Activated CD4-positive, alpha-beta T cell treated with anti-CD3 and anti-CD28 coated beads for 36 hours (primary cell): ENCODE measurements at regions of chr20 and their contacts with region 1.

Region 1: DNA sequence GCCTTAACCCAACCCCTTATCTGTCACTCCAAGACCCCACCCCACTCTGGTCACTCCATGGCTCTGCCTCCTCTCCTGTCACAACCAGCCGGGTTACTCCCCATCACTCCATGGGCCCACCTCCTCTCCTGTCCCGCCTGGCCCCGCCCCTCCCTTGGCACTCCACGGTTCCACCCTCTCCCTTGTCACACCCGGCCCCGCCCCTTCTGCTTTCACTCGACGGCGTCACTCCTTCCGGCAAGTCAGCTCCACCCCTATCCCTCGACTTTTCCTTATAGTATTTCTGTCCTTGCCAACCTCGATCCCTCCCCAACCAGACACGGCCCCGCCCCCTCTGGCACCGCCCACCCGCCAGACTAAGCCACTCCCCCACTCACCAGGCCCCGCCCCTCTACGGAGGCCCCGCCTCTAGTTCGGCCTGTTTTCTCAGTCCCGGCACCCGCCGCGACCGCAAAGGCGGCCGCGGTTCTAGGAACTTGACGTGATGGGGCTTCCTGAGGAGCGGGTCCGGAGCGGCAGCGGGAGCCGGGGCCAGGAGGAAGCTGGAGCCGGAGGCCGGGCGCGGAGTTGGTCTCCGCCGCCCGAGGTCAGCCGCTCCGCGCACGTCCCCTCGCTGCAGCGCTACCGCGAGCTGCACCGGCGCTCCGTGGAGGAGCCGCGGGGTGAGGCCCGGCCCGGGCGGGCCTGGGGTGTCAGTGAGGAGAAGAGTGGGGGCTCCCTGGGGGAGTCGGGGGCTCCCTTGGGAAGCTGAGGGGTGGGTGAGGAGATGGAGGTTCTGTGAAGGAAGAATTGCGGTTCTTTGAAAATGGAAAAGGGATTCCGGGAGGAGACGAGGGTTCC is at the start of gene ACSS2:
- DNase-seq: peak; percentile 99
- ATAC-seq: peak; percentile 86
- H3K4me3 Mint-ChIP-seq: peak within 1 kb of the TSS; percentile 90
- H3K27ac Mint-ChIP-seq: peak within 1 kb of the TSS; percentile 85
- H3K4me1 Mint-ChIP-seq: peaks cover 54% of the 10 kb centered on the region
- H3K27me3 Mint-ChIP-seq: no peaks in the 10 kb centered on the region
- total RNA-seq, gene ACSS2: 29.9 to 35.1 TPM

Region 2: DNA sequence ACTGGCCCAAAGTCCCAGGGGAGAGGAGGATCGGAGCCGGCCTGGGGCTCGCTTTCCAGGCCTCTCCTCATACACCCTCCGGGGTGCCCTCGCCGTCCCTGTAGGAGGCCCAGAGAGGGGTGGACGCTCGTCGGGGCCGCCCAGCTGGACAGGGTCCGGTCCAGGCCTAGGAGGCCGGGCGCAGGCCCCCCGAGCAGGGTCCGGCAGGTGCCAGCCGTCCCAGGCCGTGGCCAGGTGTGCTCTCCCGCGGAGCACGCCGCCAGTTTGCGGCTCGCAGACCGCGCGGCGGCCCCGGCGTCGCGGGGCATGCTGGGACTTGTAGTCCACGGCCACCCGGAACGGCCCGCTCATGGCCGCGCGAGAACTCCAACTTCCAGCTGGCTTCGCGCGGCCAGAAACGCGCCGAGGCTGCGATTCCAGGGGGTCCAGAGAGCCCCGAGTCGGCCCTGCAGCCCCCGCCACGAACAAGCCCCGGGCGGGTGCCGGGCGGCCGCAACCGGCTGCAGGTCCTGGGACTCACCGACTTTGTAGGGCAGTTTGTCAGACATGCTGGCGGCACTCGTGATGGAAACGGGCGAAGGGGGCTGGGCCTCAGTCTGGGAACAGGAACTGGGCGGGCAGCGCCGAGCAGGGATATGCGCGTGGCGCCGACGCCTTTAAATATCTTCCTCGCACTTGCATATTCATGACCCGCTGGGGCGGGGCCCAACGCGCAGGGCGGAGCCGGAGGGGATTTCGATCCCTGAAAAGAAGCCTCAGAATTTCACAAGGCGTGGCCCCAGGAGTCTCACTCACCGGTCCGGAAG is 573.5 kb before region 1 on chr20 and contains the start of gene AHCY:
- CTCF ChIA-PET with region 1: no interaction called
- POLR2A ChIA-PET with region 1: no interaction called
- intact Hi-C with region 1: loop called in 1 of 2 experiments (anchors 1 kb)
- DNase-seq: peak; percentile 97
- ATAC-seq: peak; percentile 96
- H3K4me3 Mint-ChIP-seq: peak within 1 kb of the TSS; percentile 90
- H3K27ac Mint-ChIP-seq: peak within 1 kb of the TSS; percentile 91
- H3K4me1 Mint-ChIP-seq: peaks cover 18% of the 10 kb centered on the region
- H3K27me3 Mint-ChIP-seq: no peaks in the 10 kb centered on the region
- total RNA-seq, gene AHCY: 183 to 189 TPM

Region 3: GRCh38 chr20:34704177-34705007 is 172.0 kb before region 1 on chr20 and contains the start of gene TP53INP2:
- CTCF ChIA-PET with region 1: no interaction called
- POLR2A ChIA-PET with region 1: no interaction called
- intact Hi-C with region 1: loop called in 1 of 2 experiments (anchors 1 kb)
- DNase-seq: peak; percentile 89
- ATAC-seq: peak; percentile 33
- H3K4me3 Mint-ChIP-seq: peak within 1 kb of the TSS; percentile 82
- H3K27ac Mint-ChIP-seq: peak within 1 kb of the TSS; percentile 63
- H3K4me1 Mint-ChIP-seq: peaks cover 22% of the 10 kb centered on the region
- H3K27me3 Mint-ChIP-seq: peaks cover 10% of the 10 kb centered on the region
- total RNA-seq, gene TP53INP2: 2.2 to 2.3 TPM

Region 4: GRCh38 chr20:34891166-34892062 is 15.0 kb after region 1 on chr20:
- CTCF ChIA-PET with region 1: interaction called, 6 read pairs
- POLR2A ChIA-PET with region 1: no interaction called
- intact Hi-C with region 1: loop called (anchors 1 kb)
- DNase-seq: peak; percentile 64
- ATAC-seq: peak; percentile 97
- H3K4me3 Mint-ChIP-seq: peak overlapping the region; percentile 16
- H3K27ac Mint-ChIP-seq: peak overlapping the region; percentile 78
- H3K4me1 Mint-ChIP-seq: peaks cover 42% of the 10 kb centered on the region
- H3K27me3 Mint-ChIP-seq: no peaks in the 10 kb centered on the region

Region 5: DNA sequence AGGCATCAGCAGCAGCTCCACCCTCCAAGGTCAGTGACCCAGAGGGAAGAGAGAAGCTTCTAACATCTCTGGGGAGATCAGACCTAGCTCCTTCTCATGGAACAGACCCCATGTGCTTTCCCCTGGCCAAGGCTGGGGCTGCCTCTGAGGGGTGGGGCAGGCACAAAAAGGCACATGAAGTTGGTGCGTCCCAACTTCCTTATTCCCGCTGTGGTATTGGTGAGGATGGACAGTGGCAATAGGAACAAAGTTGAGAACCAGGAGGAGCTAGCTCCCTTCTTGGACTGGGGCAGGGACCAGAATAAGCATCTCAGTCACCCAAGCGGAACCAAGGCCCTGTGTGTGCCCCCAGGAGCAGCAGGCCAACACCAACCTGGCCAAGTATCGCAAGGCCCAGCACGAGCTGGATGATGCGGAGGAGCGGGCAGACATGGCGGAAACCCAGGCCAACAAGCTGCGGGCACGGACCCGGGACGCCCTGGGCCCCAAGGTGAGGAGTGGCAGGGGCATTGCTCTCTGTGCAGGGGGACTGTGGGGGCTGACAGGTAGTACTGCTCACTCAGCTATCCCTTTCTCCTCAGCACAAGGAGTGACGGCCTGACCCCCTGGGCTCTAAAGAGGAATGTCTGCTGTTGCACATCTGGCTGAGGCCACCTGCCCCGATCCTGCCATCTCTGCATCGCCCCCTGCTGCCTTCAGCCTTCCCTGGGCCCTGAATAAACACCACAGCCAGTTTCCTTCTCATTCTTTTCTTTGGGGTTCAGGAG is 125.4 kb after region 1 on chr20:
- CTCF ChIA-PET with region 1: interaction called, 10 read pairs
- POLR2A ChIA-PET with region 1: no interaction called
- intact Hi-C with region 1: no loop called
- DNase-seq: peak; percentile 43
- ATAC-seq: no peak
- H3K4me3 Mint-ChIP-seq: no peak overlapping the region
- H3K27ac Mint-ChIP-seq: no peak overlapping the region
- H3K4me1 Mint-ChIP-seq: peaks cover 4% of the 10 kb centered on the region
- H3K27me3 Mint-ChIP-seq: no peaks in the 10 kb centered on the region

Region 6: GRCh38 chr20:35277531-35278395 is 401.4 kb after region 1 on chr20 and contains the start of gene MMP24OS:
- CTCF ChIA-PET with region 1: no interaction called
- POLR2A ChIA-PET with region 1: no interaction called
- intact Hi-C with region 1: loop called in 1 of 2 experiments (anchors 2 kb)
- DNase-seq: peak; percentile 94
- ATAC-seq: peak; percentile 96
- H3K4me3 Mint-ChIP-seq: peak within 1 kb of the TSS; percentile 99
- H3K27ac Mint-ChIP-seq: peak within 1 kb of the TSS; percentile 97
- H3K4me1 Mint-ChIP-seq: peaks cover 9% of the 10 kb centered on the region
- H3K27me3 Mint-ChIP-seq: no peaks in the 10 kb centered on the region
- total RNA-seq, gene MMP24OS: 44.6 to 56.8 TPM